ENCODE measurements at regions of chr12 and their contacts with region 1.

Region 1: GRCh38 chr12:120971299-120972179 is 6.8 kb upstream of the HNF1A start:
- DNase-seq: no peak
- ATAC-seq: peak; percentile 66 to 91 (median 80)
- H3K4me3 ChIP-seq: no peak overlapping the region
- H3K27ac ChIP-seq: no peak overlapping the region
- H3K4me1 ChIP-seq: no peaks in the 10 kb centered on the region
- H3K27me3 ChIP-seq: no peaks in the 10 kb centered on the region
- CTCF ChIP-seq: peak; percentile 76

Region 2: GRCh38 chr12:120588948-120589930 is 382.3 kb before region 1 on chr12:
- intact Hi-C with region 1: loop called (anchors 2 to 5 kb)
- DNase-seq: peak; percentile 66 to 92
- ATAC-seq: peak; percentile 78 to 89 (median 86)
- H3K4me3 ChIP-seq: peak overlapping the region; percentile 36
- H3K27ac ChIP-seq: peak overlapping the region; percentile 68
- H3K4me1 ChIP-seq: peaks cover 8% of the 10 kb centered on the region
- H3K27me3 ChIP-seq: no peaks in the 10 kb centered on the region
- CTCF ChIP-seq: no peak

Region 3: GRCh38 chr12:120649442-120650232 is 321.9 kb before region 1 on chr12:
- intact Hi-C with region 1: loop called (anchors 2 kb)
- DNase-seq: no peak
- ATAC-seq: no peak
- H3K4me3 ChIP-seq: peak overlapping the region; percentile 54
- H3K27ac ChIP-seq: peak overlapping the region; percentile 54
- H3K4me1 ChIP-seq: peaks cover 6% of the 10 kb centered on the region
- H3K27me3 ChIP-seq: peaks cover 0 to 22% (median 0%) of the 10 kb centered on the region in 3 donors
- CTCF ChIP-seq: no peak

Region 4: DNA sequence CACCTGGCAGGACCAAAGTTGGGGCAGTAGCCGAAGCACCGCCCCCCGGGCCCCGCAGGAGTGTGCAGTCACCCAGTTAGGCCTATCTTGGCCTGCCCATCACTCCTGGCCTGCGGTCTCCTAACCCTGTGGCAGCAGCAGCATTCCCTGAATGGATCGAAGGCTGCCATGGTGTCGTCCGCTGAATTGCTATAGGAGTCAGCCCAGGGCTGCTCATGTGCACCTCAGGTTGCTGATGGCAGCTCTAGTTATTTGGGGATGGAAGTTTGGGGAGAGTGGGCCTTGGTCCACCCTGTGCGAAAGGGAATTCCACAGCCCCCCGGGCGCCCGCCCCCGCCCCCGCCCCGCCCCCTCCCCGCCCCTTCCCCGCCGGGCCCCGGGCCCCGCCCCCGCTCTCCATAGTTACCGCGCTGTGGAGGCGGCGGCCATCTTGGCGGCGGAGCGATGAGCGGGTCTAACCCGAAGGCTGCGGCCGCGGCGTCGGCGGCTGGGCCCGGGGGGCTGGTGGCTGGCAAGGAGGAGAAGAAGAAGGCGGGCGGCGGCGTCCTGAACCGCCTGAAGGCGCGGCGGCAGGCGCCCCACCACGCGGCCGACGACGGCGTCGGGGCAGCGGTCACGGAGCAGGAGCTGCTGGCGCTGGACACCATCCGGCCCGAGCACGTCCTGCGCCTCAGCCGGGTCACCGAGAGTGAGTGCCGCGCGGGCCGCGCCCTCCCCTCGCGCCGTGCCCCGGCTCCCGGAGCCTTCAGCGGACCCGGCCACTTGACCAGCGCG is 261.3 kb before region 1 on chr12 and contains the start of gene UNC119B:
- intact Hi-C with region 1: loop called (anchors 5 kb)
- DNase-seq: peak; percentile 72 to 82
- ATAC-seq: peak; percentile 86 to 91 (median 88)
- H3K4me3 ChIP-seq: peak within 1 kb of the TSS; percentile 92
- H3K27ac ChIP-seq: peak within 1 kb of the TSS; percentile 85
- H3K4me1 ChIP-seq: peaks cover 18% of the 10 kb centered on the region
- H3K27me3 ChIP-seq: no peaks in the 10 kb centered on the region
- CTCF ChIP-seq: no peak
- total RNA-seq, gene UNC119B: 7.5 to 10.9 (median 7.9) TPM

Region 5: DNA sequence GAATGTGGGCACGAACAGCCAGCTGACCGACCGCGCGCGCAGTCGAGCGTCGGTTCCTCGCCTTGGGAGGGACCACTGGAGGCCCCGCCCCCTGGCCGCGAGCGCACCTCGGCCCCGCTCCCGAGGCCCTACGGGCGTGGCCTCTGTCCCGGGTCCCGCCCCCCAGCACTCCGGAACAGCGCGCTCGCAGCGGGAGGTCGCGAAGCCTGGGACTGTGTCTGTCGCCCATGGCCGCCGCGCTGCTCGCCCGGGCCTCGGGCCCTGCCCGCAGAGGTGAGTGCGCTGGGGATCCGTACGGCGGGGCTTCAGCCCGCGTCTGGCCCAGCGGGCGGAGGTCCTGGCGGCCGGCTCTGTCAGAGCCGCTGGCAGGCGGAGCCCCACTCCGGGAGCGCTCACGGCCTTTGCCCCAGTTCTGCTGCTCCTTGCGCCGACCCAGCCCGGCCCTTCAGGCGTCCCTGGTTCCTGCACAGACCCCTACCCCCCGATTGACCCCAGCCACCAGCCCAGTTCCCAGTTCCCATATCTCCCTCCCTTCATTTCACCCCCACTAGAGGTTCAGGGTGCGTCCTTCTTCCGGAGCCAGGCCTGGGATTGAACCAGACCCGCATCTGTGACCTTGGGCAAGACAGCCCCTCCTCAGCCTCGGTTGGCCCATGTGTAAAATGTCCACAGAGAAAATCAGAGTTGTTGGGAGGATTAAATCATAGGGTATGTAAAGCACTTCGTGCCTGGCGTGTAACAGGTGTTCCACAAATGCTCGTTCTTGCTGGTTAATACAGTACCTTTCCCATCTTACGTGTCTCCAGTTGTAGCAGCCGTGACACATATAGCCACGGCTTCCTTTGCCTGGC is 245.7 kb before region 1 on chr12 and contains the start of gene ACADS:
- intact Hi-C with region 1: loop called (anchors 5 kb)
- DNase-seq: peak; percentile 92 to 96
- ATAC-seq: peak; percentile 96 to 99 (median 98)
- H3K4me3 ChIP-seq: peak within 1 kb of the TSS; percentile 91
- H3K27ac ChIP-seq: peak within 1 kb of the TSS; percentile 92
- H3K4me1 ChIP-seq: peaks cover 24% of the 10 kb centered on the region
- H3K27me3 ChIP-seq: no peaks in the 10 kb centered on the region
- CTCF ChIP-seq: no peak
- total RNA-seq, gene ACADS: 81.9 to 109 (median 102) TPM

Region 6: DNA sequence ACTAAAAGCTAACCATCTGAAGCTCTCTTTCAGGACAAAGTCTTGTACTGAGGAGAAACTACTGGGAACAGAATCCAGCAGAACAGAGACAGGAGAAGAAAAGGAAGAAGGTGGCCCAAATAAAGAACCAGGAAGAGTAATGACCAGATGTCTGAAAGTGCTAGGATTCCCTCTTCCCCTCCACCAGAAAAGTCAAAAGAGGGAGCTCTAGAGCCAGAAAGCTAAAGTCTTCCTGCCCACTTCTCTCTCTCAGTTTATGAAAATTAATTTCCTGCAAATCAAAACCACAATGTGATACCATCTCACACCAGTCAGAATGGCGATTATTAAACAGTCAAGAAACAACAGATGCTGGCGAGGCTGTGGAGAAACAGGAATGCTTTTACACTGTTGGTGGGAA is 114.6 kb before region 1 on chr12:
- intact Hi-C with region 1: loop called in 1 of 2 experiments (anchors 5 kb)
- DNase-seq: no peak
- ATAC-seq: no peak
- H3K4me3 ChIP-seq: no peak overlapping the region
- H3K27ac ChIP-seq: no peak overlapping the region
- H3K4me1 ChIP-seq: peaks cover 35% of the 10 kb centered on the region
- H3K27me3 ChIP-seq: no peaks in the 10 kb centered on the region
- CTCF ChIP-seq: peak; percentile 25

Region 7: GRCh38 chr12:121144416-121144914 is 172.9 kb after region 1 on chr12:
- intact Hi-C with region 1: no loop called
- DNase-seq: no peak
- ATAC-seq: peak in 1 of 4 donors; percentile 30
- H3K4me3 ChIP-seq: no peak overlapping the region
- H3K27ac ChIP-seq: no peak overlapping the region
- H3K4me1 ChIP-seq: no peaks in the 10 kb centered on the region
- H3K27me3 ChIP-seq: no peaks in the 10 kb centered on the region
- CTCF ChIP-seq: no peak